Vagina (tissue), 2 donors: ENCODE measurements at regions of chr6 and their contacts with region 1.

Region 1: DNA sequence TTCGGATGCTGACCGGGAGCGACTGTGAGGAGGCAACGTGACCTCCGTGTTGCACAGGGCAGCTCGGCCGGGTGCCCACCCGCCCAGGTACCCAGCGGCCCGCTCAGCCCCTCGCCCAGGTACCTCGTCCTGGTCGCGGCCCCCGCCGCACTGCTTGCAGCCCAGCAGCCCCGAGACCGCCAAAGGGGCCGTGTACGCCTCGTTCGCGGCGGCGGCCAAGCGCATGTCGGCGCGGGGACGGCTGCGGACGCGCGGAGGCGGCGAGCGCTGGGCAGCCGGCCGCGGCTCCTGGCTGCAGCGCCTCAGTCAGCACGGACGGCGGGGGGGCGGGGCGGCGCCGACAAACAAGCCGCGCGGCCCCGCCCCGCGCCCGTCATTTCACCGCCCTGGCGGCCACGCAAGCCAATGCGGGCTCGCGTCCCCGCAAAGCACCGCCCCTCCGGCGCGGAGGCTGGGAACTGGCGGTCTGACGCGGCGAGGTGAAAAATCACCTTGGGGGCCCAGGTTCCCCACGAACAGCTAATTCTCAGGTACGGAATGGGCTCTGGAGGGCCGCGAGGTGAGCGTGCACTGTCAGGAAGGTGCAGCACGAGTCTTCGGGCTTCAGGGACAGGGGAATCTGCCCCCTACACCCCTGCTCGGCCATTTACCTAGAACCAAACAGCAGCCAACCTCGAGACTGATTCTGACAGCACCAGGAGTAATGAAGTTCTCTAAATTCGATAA is 85.2 kb downstream of the SESN1 start:
- DNase-seq: peak in 1 of 2 donors; percentile 92
- H3K4me3 ChIP-seq: peak overlapping the region; percentile 97 to 98
- H3K27ac ChIP-seq: peak overlapping the region; percentile 97
- H3K4me1 ChIP-seq: peaks cover 44% of the 10 kb centered on the region
- H3K27me3 ChIP-seq: no peaks in the 10 kb centered on the region
- CTCF ChIP-seq: peak in 1 of 3 experiments; percentile 34
- POLR2A ChIP-seq: peak in 1 of 2 donors; percentile 80

Region 2: GRCh38 chr6:108947114-108947854 is 62.1 kb before region 1 on chr6:
- intact Hi-C with region 1: loop called (anchors 10 kb)
- DNase-seq: no peak
- H3K4me3 ChIP-seq: no peak overlapping the region
- H3K27ac ChIP-seq: peak overlapping the region; percentile 89
- H3K4me1 ChIP-seq: peaks cover 83% of the 10 kb centered on the region
- H3K27me3 ChIP-seq: no peaks in the 10 kb centered on the region
- CTCF ChIP-seq: no peak
- POLR2A ChIP-seq: no peak

Region 3: DNA sequence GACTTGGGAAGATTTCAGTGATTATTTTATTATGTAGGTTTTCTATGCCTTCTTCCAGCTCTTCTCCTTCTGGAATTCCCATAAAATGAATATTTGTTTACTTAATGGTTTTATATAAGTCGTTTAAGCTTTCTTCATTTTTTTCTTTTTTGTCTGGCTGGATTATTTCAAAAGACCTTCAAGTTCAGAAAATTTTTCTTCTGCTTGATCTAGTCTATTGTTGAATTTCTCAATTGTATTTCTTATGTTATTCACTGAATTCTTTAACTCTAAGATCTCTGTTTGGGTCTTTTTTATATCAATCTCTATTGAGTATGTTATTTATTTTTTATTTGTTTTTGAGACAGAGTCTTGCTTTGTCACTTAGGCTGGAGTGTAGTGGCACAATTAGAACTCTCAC is 203.3 kb after region 1 on chr6:
- intact Hi-C with region 1: no loop called
- DNase-seq: no peak
- H3K4me3 ChIP-seq: no peak overlapping the region
- H3K27ac ChIP-seq: no peak overlapping the region
- H3K4me1 ChIP-seq: no peaks in the 10 kb centered on the region
- H3K27me3 ChIP-seq: no peaks in the 10 kb centered on the region
- CTCF ChIP-seq: no peak
- POLR2A ChIP-seq: no peak

Region 4: DNA sequence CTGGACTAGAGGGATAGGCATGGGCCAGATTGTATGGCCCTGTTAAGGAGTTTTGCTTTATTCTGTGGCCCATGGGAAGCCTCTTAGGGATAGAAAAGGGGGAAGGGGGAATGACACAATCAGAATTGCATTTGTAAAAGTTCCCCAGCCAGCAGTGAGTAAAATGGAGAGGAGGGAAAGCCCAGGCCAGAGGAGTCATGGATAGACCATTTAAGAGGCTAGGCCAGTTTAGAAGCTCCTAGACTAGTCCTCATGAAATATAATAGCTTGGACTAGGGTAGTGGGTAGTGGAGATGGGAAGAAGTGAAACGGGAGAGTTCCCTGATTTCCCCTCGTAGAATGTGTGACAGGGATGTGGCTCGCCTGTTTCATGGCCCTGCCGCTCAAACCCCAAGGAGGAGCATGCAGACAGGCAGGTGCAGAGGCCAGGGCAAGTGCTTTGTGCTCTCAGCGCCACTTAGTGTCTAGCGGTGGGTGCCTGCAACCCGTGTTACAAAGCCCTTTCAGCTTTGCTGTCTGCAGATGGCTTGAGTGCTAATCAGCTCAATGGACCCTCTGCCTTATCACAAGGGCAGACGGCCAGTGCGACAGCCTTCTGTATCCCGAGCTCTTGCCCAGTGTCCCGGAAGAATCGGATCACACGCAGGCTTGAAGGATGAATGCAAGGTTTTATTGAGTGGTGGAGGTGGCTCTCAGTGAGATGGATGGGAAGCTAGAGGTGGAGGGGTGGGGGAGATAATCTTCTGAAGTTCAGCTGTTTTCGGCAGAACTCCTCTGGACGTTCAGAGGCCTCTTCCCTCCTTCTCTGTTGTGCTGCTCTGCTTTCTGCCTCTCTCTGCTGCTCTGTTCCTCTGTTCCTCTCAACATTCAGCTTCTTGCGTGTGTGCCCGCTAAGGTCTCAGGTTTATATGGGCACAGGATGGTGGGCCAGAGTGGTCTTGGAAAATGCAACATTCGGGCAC is 227.0 kb after region 1 on chr6:
- intact Hi-C with region 1: no loop called
- DNase-seq: no peak
- H3K4me3 ChIP-seq: no peak overlapping the region
- H3K27ac ChIP-seq: no peak overlapping the region
- H3K4me1 ChIP-seq: no peaks in the 10 kb centered on the region
- H3K27me3 ChIP-seq: no peaks in the 10 kb centered on the region
- CTCF ChIP-seq: no peak
- POLR2A ChIP-seq: no peak